CD4-positive, alpha-beta T cell (primary cell): ENCODE measurements at regions of chr20 and their contacts with region 1.

Region 1: DNA sequence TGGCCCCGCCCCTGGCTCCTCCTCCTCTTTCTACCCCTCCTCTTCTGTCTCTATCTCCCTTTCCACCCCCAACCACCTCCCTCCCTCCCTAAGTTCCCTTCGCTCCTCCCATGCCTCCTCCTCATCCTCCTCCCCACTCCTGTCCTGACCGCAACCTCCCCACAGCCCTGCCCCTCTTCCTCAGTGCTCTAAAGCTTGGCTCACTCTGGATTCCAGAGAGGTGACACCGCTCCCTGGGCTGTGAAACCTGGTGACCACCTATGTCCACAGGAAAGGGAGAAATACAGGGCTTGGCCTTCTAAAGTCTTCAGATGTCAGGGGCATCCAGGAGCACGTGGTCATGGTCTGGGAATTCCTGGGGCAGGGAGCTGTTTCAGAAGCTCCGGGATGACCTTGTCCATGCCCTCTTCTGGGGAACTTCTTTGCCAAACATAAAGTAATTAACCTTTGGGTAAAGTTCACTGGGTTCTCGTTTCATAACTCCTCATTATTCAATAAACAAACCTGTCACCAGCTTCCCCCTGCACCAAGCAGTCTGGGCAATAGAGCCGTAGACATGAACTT is 345 bp upstream of the CST5 start:
- DNase-seq: no peak
- ATAC-seq: no peak
- H3K4me3 ChIP-seq: no peak overlapping the region
- H3K4me3 Mint-ChIP-seq: no peak overlapping the region
- H3K27ac ChIP-seq: no peak overlapping the region
- H3K27ac Mint-ChIP-seq: no peak overlapping the region
- H3K4me1 ChIP-seq: peaks cover 1% of the 10 kb centered on the region
- H3K4me1 Mint-ChIP-seq: peaks cover 1% of the 10 kb centered on the region
- H3K27me3 ChIP-seq: no peaks in the 10 kb centered on the region
- H3K27me3 Mint-ChIP-seq: no peaks in the 10 kb centered on the region
- CTCF ChIP-seq: no peak

Region 2: DNA sequence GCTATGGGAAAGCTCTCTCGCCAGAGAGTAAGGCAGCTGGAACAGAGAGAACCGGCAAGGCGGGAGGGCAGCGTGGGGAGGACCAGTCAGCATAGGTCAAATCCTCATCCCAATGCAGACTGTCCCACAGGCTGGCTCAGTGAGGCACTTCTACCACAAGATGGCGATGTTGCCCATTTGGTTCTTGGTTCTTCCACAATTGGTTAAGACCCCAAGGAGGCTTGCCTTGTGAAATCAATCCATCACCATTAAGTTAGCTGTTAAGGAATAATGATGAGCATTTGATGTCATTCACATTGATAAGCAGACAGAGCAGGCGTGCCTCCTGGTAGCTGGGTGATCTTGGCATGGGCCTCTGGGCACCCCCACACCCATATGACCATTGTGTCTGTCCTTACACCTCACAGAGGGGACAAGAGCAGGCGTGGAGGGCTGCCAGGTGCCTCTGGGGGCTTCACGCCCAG is 438.0 kb before region 1 on chr20:
- CTCF ChIA-PET with region 1: no interaction called
- POLR2A ChIA-PET with region 1: no interaction called
- intact Hi-C with region 1: no loop called
- DNase-seq: peak; percentile 17 to 74 (median 40)
- ATAC-seq: peak; percentile 51
- H3K4me3 ChIP-seq: no peak overlapping the region
- H3K4me3 Mint-ChIP-seq: no peak overlapping the region
- H3K27ac ChIP-seq: no peak overlapping the region
- H3K27ac Mint-ChIP-seq: no peak overlapping the region
- H3K4me1 ChIP-seq: no peaks in the 10 kb centered on the region
- H3K4me1 Mint-ChIP-seq: no peaks in the 10 kb centered on the region
- H3K27me3 ChIP-seq: no peaks in the 10 kb centered on the region
- H3K27me3 Mint-ChIP-seq: no peaks in the 10 kb centered on the region
- CTCF ChIP-seq: peak; percentile 78

Region 3: GRCh38 chr20:23800878-23801277 is 79.0 kb before region 1 on chr20:
- CTCF ChIA-PET with region 1: no interaction called
- POLR2A ChIA-PET with region 1: no interaction called
- intact Hi-C with region 1: loop called in 1 of 2 experiments (anchors 2 kb)
- DNase-seq: no peak
- ATAC-seq: no peak
- H3K4me3 ChIP-seq: no peak overlapping the region
- H3K4me3 Mint-ChIP-seq: no peak overlapping the region
- H3K27ac ChIP-seq: no peak overlapping the region
- H3K27ac Mint-ChIP-seq: no peak overlapping the region
- H3K4me1 ChIP-seq: no peaks in the 10 kb centered on the region
- H3K4me1 Mint-ChIP-seq: no peaks in the 10 kb centered on the region
- H3K27me3 ChIP-seq: no peaks in the 10 kb centered on the region
- H3K27me3 Mint-ChIP-seq: peaks cover 4% of the 10 kb centered on the region
- CTCF ChIP-seq: no peak

Region 4: GRCh38 chr20:23869520-23869919 is 10.4 kb before region 1 on chr20:
- CTCF ChIA-PET with region 1: no interaction called
- POLR2A ChIA-PET with region 1: no interaction called
- intact Hi-C with region 1: no loop called
- DNase-seq: no peak
- ATAC-seq: no peak
- H3K4me3 ChIP-seq: no peak overlapping the region
- H3K4me3 Mint-ChIP-seq: no peak overlapping the region
- H3K27ac ChIP-seq: no peak overlapping the region
- H3K27ac Mint-ChIP-seq: no peak overlapping the region
- H3K4me1 ChIP-seq: peaks cover 17% of the 10 kb centered on the region
- H3K4me1 Mint-ChIP-seq: peaks cover 31% of the 10 kb centered on the region
- H3K27me3 ChIP-seq: peaks cover 0 to 4% of the 10 kb centered on the region in 2 experiments
- H3K27me3 Mint-ChIP-seq: peaks cover 5% of the 10 kb centered on the region
- CTCF ChIP-seq: no peak